ENCODE measurements at regions of chr1 and their contacts with region 1.

Region 1: DNA sequence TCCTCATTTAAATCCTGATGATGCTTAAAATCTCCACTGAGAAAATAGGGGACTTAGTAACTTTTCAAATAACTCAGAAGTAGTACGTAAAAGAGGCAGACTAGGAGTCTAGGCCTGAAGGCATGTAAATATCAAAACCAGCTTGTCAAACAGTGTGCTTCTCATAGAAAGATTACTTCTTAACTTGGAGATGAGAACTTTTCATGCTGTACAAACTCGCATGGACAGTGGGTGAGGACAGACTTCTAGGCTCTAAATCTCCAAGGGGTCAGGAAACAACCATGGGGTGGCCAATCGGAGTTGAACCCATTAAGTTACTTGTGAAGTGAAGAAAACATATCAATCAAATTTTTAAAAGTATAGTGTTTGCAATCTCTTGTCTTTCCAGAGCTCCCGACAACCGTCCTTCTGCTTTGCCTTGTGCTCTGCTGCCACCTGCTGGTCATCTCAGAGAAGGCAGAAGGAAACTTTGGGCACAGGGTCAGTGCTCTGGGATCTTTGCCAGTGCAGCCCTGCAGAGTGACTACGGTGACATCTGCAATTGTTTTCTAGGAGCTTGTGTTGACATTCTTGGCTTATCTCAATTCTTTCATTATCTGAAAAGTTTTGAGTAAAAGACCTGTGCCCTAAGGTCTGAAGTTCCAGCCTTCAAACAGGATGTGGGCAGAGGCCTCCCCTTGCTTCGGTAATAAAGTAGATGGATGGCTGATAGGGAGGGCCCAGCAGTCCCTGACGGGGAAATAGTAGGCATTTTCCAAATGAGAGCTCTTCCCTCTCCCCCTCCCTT is 105.1 kb upstream of the PDE4B start:
- H3K4me3 ChIP-seq: no peak overlapping the region
- H3K27ac ChIP-seq: no peak overlapping the region; the same call in 1 of the 2 replicates
- H3K4me1 ChIP-seq: 0 out of 2 replicates have a peak, but pooled peaks cover 2% of the 10 kb centered on the region
- CTCF ChIP-seq: peak; percentile 84

Region 2: GRCh38 chr1:65075123-65075976 is 612.3 kb before region 1 on chr1:
- CTCF ChIA-PET with region 1: interaction called, 10 read pairs
- POLR2A ChIA-PET with region 1: no interaction called
- H3K4me3 ChIP-seq: no peak overlapping the region
- H3K27ac ChIP-seq: no peak overlapping the region
- H3K4me1 ChIP-seq: no peaks in the 10 kb centered on the region
- CTCF ChIP-seq: peak; percentile 70; the same call in 1 of the 2 replicates

Region 3: DNA sequence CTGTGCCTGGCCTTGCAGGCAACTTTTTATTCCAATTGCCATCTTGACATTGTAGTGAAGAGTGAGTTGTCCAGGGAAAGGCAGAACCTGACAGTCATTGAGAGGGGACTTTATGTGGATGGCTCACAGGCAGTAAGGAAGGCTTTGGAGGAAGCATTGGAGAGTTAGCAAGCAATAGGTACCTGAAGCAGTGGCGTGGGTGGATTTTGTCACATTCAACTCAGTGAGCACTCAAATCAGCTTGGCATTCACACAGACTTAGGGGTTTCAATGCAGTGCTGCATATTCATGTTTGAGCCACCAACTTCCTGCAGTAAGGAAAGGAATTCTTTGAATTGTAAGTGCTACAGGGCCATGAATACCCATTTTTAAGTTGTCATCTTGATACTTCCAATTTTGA is 470.6 kb before region 1 on chr1:
- CTCF ChIA-PET with region 1: interaction called, 17 read pairs
- POLR2A ChIA-PET with region 1: no interaction called
- H3K4me3 ChIP-seq: no peak overlapping the region
- H3K27ac ChIP-seq: no peak overlapping the region
- H3K4me1 ChIP-seq: no peaks in the 10 kb centered on the region
- CTCF ChIP-seq: no peak

Region 4: DNA sequence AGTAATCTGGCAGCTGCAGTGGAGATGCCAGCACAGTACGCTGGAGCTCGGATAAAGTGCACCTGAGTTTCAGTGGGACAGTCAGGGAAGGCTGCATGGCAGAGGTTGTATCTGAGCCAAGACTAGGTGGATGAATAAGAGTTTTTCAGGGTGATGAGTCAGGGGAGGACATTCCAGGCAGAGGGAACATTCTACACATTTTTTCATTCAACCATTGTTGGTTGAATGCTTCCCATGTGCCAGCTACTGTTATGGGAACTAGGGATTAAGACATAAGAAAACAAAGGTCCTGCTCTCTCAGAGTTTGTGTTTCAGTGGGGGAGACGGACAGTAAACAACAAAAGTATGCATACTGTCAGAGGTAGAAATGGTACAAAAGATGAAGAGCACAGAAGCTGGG is 261.9 kb before region 1 on chr1:
- CTCF ChIA-PET with region 1: interaction called, 23 read pairs
- POLR2A ChIA-PET with region 1: no interaction called
- H3K4me3 ChIP-seq: no peak overlapping the region
- H3K27ac ChIP-seq: no peak overlapping the region
- H3K4me1 ChIP-seq: no peaks in the 10 kb centered on the region
- CTCF ChIP-seq: no peak

Region 5: DNA sequence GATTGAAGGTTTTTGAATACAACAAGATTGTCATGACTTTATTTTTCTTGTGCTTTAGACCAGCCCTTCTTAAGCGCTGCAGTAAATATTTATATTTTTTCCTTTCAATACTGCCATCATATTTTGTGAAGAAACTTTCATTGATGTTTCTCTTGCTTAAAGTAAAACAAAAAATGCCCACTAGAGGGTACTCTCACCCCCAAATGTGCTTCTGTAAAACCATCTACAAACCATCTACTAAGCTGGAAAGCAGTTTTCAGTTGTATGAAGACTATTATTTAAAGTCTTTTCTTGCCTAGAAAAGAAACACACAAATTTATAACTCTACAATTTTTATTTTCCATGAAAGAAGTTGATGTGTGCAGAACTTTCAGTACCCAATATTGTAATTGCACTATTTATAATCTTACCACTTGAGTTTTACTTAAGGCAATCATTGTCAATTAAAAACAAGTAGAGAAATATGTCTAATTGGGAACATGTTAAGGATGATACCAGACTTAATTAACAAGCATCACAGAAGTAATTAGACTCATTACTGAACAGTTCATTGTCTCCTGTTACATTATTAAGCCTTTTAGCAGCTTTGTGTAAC is 256.4 kb before region 1 on chr1:
- CTCF ChIA-PET with region 1: interaction called, 23 read pairs
- POLR2A ChIA-PET with region 1: no interaction called
- H3K4me3 ChIP-seq: no peak overlapping the region
- H3K27ac ChIP-seq: no peak overlapping the region
- H3K4me1 ChIP-seq: no peaks in the 10 kb centered on the region
- CTCF ChIP-seq: 0 out of 2 replicates have a peak, but pooled peaks have one; percentile 7